Vagina (tissue), 2 donors: ENCODE measurements at regions of chr9 and their contacts with region 1.

Region 1: GRCh38 chr9:110069326-110070248 is 138.4 kb downstream of the C9orf152 start:
- DNase-seq: no peak
- H3K4me3 ChIP-seq: no peak overlapping the region
- H3K27ac ChIP-seq: peak overlapping the region; percentile 22
- H3K4me1 ChIP-seq: peaks cover 7% of the 10 kb centered on the region
- H3K27me3 ChIP-seq: no peaks in the 10 kb centered on the region
- CTCF ChIP-seq: no peak
- POLR2A ChIP-seq: no peak

Region 2: DNA sequence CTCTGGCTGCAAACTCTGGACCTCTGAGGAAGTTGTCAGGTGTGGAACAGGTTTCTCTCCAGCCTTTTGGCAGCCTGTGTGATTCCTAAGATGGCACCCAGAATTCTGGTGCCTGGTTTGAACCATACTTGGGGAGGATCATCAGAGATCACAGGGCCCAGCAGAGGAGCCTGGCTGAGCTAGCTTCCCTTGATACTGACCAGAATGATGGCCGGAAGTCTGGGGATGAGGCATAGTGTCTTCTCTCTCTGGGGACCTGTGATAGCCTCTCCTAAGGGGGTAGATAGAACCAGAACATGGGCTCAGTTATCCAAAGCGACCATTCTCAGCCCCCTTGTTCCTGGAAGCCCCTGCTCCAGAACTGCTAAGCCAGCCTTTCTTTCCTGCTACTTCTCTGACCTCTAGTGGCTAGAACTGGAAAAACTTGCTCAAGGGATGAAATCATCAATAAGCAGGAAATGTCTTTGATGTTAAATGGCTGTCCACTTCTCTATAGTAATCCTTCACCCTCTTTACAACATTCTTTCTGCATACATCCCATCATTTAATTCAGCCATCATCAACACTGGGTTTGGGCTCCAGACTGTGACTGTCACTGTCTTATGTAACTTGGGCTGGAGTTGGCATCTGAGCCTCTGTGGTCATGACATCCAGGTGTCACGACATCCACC is 83.3 kb after region 1 on chr9:
- intact Hi-C with region 1: loop called (anchors 10 kb)
- DNase-seq: no peak
- H3K4me3 ChIP-seq: no peak overlapping the region
- H3K27ac ChIP-seq: no peak overlapping the region
- H3K4me1 ChIP-seq: peaks cover 30% of the 10 kb centered on the region
- H3K27me3 ChIP-seq: no peaks in the 10 kb centered on the region
- CTCF ChIP-seq: peak; percentile 25 to 53 (median 44)
- POLR2A ChIP-seq: no peak

Region 3: DNA sequence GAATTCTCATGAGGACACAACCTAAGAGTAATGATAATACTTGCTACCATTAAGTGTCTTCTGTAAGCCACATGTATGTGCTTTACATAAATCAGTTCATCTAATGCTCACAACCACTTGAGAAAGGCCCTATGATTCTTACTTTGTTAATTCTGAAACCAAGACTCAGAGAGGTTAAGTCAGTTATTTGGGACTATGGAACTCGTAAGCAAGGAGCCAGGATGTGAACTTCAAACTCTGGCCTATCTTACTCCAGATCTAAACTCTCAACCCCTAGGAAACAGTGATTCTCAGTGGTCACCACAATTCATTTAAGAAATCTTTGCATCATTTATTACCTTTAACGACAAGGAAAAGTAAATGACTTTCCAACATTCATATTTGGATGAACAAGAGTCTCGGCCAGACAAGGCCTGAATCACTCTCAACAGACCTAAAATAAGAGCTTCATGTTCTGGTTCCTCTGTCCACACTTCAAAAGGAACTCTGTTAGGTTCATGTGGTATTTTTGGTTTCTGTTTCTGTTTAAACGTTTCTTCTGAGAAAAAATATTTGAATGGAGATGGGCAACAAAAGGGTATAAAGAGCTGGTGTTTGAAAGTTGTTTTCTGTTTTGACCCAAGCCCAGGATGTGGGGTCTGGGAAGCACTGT is 863.9 kb after region 1 on chr9:
- intact Hi-C with region 1: no loop called
- DNase-seq: no peak
- H3K4me3 ChIP-seq: no peak overlapping the region
- H3K27ac ChIP-seq: no peak overlapping the region
- H3K4me1 ChIP-seq: peaks cover 36% of the 10 kb centered on the region
- H3K27me3 ChIP-seq: no peaks in the 10 kb centered on the region
- CTCF ChIP-seq: no peak
- POLR2A ChIP-seq: no peak